ENCODE measurements at regions of chr20 and their contacts with region 1.

Region 1: GRCh38 chr20:23361598-23362384 is at the start of gene GZF1:
- DNase-seq: peak; percentile 96
- ATAC-seq: peak; percentile 82
- H3K4me3 Mint-ChIP-seq: peak within 1 kb of the TSS; percentile 92
- H3K27ac Mint-ChIP-seq: peak within 1 kb of the TSS; percentile 94
- H3K4me1 Mint-ChIP-seq: peaks cover 51% of the 10 kb centered on the region
- H3K27me3 Mint-ChIP-seq: no peaks in the 10 kb centered on the region
- CTCF ChIP-seq: no peak
- total RNA-seq, gene GZF1: 11.8 to 13.7 TPM

Region 2: GRCh38 chr20:23316626-23317025 is 45.2 kb before region 1 on chr20:
- CTCF ChIA-PET with region 1: no interaction called
- POLR2A ChIA-PET with region 1: no interaction called
- intact Hi-C with region 1: no loop called
- DNase-seq: no peak
- ATAC-seq: no peak
- H3K4me3 Mint-ChIP-seq: no peak overlapping the region
- H3K27ac Mint-ChIP-seq: no peak overlapping the region
- H3K4me1 Mint-ChIP-seq: no peaks in the 10 kb centered on the region
- H3K27me3 Mint-ChIP-seq: peaks cover 3% of the 10 kb centered on the region
- CTCF ChIP-seq: no peak

Region 3: GRCh38 chr20:23326769-23327168 is 35.0 kb before region 1 on chr20:
- CTCF ChIA-PET with region 1: no interaction called
- POLR2A ChIA-PET with region 1: no interaction called
- intact Hi-C with region 1: no loop called
- DNase-seq: no peak
- ATAC-seq: no peak
- H3K4me3 Mint-ChIP-seq: no peak overlapping the region
- H3K27ac Mint-ChIP-seq: no peak overlapping the region
- H3K4me1 Mint-ChIP-seq: no peaks in the 10 kb centered on the region
- H3K27me3 Mint-ChIP-seq: no peaks in the 10 kb centered on the region
- CTCF ChIP-seq: no peak

Region 4: GRCh38 chr20:23350196-23350903 is 11.4 kb before region 1 on chr20 and contains the start of gene NXT1:
- CTCF ChIA-PET with region 1: interaction called, 7 read pairs
- POLR2A ChIA-PET with region 1: interaction called, 43 read pairs
- intact Hi-C with region 1: no loop called
- DNase-seq: peak; percentile 95
- ATAC-seq: peak; percentile 86
- H3K4me3 Mint-ChIP-seq: peak within 1 kb of the TSS; percentile 94
- H3K27ac Mint-ChIP-seq: peak within 1 kb of the TSS; percentile 99
- H3K4me1 Mint-ChIP-seq: peaks cover 37% of the 10 kb centered on the region
- H3K27me3 Mint-ChIP-seq: no peaks in the 10 kb centered on the region
- CTCF ChIP-seq: no peak
- total RNA-seq, gene NXT1: 35.8 to 37.8 TPM

Region 5: GRCh38 chr20:23374441-23374840 is 12.7 kb after region 1 on chr20:
- CTCF ChIA-PET with region 1: no interaction called
- POLR2A ChIA-PET with region 1: no interaction called
- intact Hi-C with region 1: no loop called
- DNase-seq: no peak
- ATAC-seq: no peak
- H3K4me3 Mint-ChIP-seq: no peak overlapping the region
- H3K27ac Mint-ChIP-seq: no peak overlapping the region
- H3K4me1 Mint-ChIP-seq: peaks cover 3% of the 10 kb centered on the region
- H3K27me3 Mint-ChIP-seq: no peaks in the 10 kb centered on the region
- CTCF ChIP-seq: no peak

Region 6: GRCh38 chr20:23399568-23400241 is 37.9 kb after region 1 on chr20:
- CTCF ChIA-PET with region 1: no interaction called
- POLR2A ChIA-PET with region 1: interaction called, 16 read pairs
- intact Hi-C with region 1: no loop called
- DNase-seq: peak; percentile 54
- ATAC-seq: peak; percentile 92
- H3K4me3 Mint-ChIP-seq: no peak overlapping the region
- H3K27ac Mint-ChIP-seq: peak overlapping the region; percentile 78
- H3K4me1 Mint-ChIP-seq: peaks cover 61% of the 10 kb centered on the region
- H3K27me3 Mint-ChIP-seq: no peaks in the 10 kb centered on the region
- CTCF ChIP-seq: no peak

Region 7: DNA sequence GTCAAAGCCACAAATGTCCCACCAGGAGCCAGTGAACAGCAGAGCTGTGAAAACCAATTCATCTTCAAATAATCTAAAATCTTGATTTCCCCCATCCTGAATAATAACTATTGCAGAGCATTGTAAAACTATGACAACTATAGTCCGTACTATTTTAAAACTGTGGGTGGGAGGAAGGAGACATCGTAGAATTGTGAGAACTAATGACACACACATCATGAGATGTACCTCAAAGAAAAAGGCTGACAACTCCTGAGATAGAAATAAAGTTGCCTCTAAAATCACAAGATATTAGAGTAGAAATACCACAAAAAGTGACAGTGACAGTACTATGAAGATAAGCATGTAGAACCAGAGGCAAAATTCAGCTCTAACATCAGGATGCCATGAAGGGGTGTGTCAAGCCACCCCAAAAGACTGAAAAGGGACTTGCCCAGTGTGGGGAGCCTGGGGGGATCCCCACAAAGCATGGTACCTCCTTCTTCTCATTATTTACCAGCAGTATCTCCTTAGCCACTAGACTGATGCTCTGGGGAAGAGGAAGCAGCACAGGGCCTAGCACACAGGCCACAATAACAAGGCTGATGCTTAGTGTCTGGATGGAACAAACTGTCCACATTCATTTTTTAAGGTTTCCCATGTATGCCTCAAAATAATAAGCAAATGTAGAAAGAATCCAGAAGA is 46.1 kb after region 1 on chr20:
- CTCF ChIA-PET with region 1: no interaction called
- POLR2A ChIA-PET with region 1: no interaction called
- intact Hi-C with region 1: loop called (anchors 5 kb)
- DNase-seq: peak; percentile 64
- ATAC-seq: peak; percentile 99
- H3K4me3 Mint-ChIP-seq: no peak overlapping the region
- H3K27ac Mint-ChIP-seq: peak overlapping the region; percentile 80
- H3K4me1 Mint-ChIP-seq: peaks cover 59% of the 10 kb centered on the region
- H3K27me3 Mint-ChIP-seq: no peaks in the 10 kb centered on the region
- CTCF ChIP-seq: no peak

Region 8: GRCh38 chr20:23420943-23421931 is 59.4 kb after region 1 on chr20 and contains the start of gene NAPB:
- CTCF ChIA-PET with region 1: interaction called, 6 read pairs
- POLR2A ChIA-PET with region 1: interaction called, 6 read pairs
- intact Hi-C with region 1: loop called (anchors 5 kb)
- DNase-seq: peak; percentile 96
- ATAC-seq: peak; percentile 98
- H3K4me3 Mint-ChIP-seq: peak within 1 kb of the TSS; percentile 93
- H3K27ac Mint-ChIP-seq: peak within 1 kb of the TSS; percentile 80
- H3K4me1 Mint-ChIP-seq: peaks cover 62% of the 10 kb centered on the region
- H3K27me3 Mint-ChIP-seq: no peaks in the 10 kb centered on the region
- CTCF ChIP-seq: peak; percentile 43
- total RNA-seq, gene NAPB: 14.3 to 16.8 TPM

Region 9: DNA sequence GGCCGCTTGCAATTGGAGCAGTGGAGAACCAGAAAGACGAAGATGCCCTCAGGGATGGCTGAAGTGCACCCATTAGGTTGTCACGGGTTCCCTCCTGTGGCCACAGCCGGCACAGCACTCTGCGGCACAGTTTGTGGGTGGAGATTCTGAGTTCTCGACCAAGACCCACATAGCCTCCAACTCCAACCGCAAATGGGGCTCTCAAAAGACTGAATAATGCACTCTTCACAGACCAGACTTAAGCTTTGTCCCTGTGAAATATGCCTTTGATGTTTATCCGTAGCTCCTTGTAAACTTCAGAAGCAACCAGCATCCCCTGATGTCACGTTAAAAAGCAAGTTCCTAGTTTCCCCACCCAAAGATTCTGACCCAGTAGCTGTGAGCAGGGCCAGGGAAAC is 244.9 kb after region 1 on chr20:
- CTCF ChIA-PET with region 1: interaction called, 4 read pairs
- POLR2A ChIA-PET with region 1: no interaction called
- intact Hi-C with region 1: loop called (anchors 10 kb)
- DNase-seq: peak; percentile 85
- ATAC-seq: peak; percentile 98
- H3K4me3 Mint-ChIP-seq: no peak overlapping the region
- H3K27ac Mint-ChIP-seq: no peak overlapping the region
- H3K4me1 Mint-ChIP-seq: peaks cover 4% of the 10 kb centered on the region
- H3K27me3 Mint-ChIP-seq: no peaks in the 10 kb centered on the region
- CTCF ChIP-seq: peak; percentile 81